ENCODE measurements at regions of chr14 and their contacts with region 1.

Region 1: GRCh38 chr14:54773171-54773975 is 129.3 kb downstream of the GCH1 start:
- DNase-seq: peak; percentile 74
- CTCF ChIP-seq: peak; percentile 41

Region 2: DNA sequence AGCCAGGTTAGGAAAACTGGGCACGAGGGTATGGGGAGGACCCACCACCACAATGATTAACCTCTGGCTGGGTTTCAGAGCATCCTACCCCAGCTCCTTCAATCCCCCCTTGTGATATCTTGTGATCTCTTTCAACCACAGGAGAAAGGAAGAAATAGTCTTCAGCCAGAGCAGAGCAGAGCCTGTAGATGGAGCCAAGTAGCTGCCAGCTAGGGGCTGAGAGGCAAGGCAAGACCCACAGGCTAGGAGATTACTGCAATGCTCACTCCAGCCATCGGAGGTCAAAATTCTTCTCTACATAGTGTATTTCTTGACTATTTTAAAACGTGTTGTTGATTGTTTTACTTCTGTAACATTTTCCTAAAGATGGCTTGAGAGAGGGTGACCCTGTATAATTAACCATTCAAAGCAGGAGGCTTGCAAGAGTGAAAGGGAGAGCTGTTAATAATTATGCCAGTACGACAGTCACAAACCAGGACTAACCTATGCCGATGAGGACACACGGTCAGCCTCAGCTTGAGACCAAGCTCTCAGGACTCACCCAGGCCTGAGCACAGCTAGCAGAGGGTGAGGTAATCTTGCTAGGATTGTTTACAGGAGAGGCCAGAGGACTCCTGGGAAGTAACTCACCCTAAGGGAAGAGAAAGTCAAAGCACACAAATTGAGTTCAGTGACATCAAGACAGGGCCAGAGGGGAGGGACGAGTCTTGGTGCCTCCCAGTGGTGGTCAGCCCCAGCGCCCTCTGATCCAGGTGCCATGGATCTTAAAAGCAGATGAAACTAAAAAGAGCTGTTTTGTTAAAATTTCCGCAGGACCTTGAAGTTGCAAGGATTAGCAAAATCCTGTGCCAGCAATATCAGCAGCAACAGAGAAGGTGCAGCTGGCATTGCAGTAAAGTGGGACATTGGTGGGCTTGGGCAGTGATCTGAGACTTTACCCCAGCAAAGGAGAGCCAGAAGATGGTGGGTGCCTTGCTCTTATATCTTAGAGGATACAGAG is 406.3 kb before region 1 on chr14:
- CTCF ChIA-PET with region 1: interaction called, 5 read pairs
- POLR2A ChIA-PET with region 1: interaction called, 11 read pairs
- DNase-seq: peak; percentile 28
- CTCF ChIP-seq: peak; percentile 73

Region 3: DNA sequence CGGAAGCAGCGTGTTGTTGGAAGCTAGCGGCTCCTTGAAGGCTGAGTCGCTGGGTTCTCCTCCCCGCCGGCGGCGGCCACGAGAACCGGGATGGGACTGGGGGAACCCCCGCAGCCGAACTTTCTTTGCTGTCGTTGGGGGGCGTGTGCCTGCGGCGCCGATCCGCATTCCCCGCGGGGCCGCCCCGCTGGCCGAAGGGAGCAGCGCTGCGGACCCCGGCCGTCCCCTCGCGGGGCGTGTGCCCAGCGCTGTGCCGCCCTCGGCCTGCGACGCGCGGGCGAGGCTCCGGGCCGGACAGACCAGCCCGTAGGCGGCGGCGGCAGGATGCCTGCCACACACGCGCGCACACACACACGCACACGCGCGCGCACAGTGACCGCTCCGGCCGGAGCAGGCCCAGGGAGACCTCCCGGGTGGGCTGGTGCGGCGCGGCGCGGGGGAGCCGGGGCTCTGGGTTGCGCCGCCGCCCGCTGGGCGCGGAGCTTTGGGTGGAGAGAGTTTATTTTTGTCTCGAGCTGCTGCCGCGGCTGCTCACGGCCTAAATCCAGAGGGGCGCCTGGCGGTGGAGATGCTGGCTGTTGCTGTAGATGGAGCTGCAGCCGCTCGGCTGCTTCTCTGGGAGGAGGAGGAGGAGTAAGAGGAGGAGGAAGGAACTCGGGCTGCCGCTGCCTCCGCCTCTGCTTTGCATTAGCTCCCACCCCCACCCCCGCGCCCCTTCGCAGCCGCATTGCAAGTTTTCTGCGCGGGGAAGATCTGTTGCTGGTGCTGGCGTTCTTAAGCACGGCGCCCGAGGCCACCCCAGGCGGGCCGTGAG is 206.8 kb before region 1 on chr14 and contains the start of gene SAMD4A:
- CTCF ChIA-PET with region 1: interaction called, 149 read pairs
- POLR2A ChIA-PET with region 1: no interaction called
- DNase-seq: peak; percentile 76
- CTCF ChIP-seq: peak; percentile 32

Region 4: GRCh38 chr14:54683882-54684794 is 89.2 kb before region 1 on chr14:
- CTCF ChIA-PET with region 1: interaction called, 21 read pairs
- POLR2A ChIA-PET with region 1: no interaction called
- DNase-seq: no peak
- CTCF ChIP-seq: no peak

Region 5: DNA sequence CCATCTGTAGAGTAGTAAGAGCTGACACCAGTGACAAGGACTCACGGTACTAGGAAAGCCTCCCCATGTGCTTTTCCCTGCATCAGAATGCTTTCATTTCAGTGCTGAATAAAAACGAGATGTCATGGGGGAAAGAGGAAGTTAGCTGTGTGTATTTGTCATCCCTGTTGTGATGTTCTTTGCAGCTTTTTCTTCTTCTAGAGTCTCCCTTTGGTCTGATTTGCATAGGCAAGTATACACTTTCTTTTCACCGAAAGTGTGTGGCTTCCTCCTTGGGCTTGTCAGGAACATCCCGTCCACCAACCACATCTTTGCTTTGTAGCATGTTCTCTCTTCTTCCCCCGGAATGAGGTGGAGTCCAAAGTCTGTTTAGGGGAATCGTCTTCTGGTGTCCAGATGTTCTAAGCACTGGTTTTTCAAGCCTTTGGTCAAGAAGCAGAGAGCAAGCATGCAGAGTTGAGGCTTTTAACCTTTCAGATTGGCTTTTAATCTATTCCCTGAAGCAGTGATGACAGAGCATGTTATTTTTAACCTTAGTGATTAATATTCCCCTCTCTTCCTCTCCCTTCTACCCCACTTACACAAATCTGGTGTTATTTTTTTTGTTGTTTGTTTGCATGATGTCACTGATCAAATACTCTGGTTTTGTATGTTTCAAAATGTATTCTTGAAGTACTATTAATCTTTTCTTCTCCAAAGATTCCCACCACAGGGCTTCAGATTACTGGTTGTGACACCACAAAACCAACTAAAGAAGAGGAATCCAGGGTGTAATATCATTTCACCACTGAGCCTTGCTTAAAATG is 43.0 kb before region 1 on chr14:
- CTCF ChIA-PET with region 1: interaction called, 34 read pairs
- POLR2A ChIA-PET with region 1: no interaction called
- DNase-seq: peak; percentile 54
- CTCF ChIP-seq: no peak

Region 6: DNA sequence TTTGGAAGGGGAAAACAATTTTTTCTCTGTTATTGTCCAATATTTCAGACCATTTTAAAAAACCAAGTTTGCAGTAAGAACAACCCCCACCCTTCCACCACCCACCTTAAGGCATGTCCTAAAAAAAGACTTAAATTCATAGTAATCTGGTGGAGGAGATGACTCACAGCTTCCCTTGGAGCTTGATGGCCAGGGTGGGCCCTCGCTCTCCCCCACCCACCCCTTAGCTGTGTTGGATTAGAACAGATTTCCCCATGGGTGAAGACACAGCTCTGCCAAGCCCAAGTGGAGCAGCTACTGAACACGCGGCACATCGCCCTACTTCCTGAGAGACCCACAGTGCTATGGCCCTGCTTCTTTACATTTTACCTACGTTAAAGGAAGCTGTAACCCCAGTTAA is 11.1 kb before region 1 on chr14:
- CTCF ChIA-PET with region 1: interaction called, 25 read pairs
- POLR2A ChIA-PET with region 1: interaction called, 7 read pairs
- DNase-seq: no peak
- CTCF ChIP-seq: no peak

Region 7: GRCh38 chr14:54818201-54819133 is 45.1 kb after region 1 on chr14:
- CTCF ChIA-PET with region 1: interaction called, 18 read pairs
- POLR2A ChIA-PET with region 1: no interaction called
- DNase-seq: no peak
- CTCF ChIP-seq: no peak